ENCODE measurements at regions of chr14 and their contacts with region 1.

Region 1: GRCh38 chr14:32611752-32612151 is 282.7 kb downstream of the AKAP6 start:
- DNase-seq: no peak
- ATAC-seq: no peak
- H3K4me3 ChIP-seq: no peak overlapping the region
- H3K4me3 Mint-ChIP-seq: no peak overlapping the region
- H3K27ac ChIP-seq: no peak overlapping the region
- H3K27ac Mint-ChIP-seq: no peak overlapping the region
- H3K4me1 ChIP-seq: no peaks in the 10 kb centered on the region
- H3K4me1 Mint-ChIP-seq: no peaks in the 10 kb centered on the region
- H3K27me3 ChIP-seq: no peaks in the 10 kb centered on the region
- H3K27me3 Mint-ChIP-seq: no peaks in the 10 kb centered on the region

Region 2: GRCh38 chr14:31377433-31377832 is 1234.3 kb before region 1 on chr14:
- CTCF ChIA-PET with region 1: interaction called in 1 of 2 experiments, 11 read pairs
- POLR2A ChIA-PET with region 1: no interaction called
- DNase-seq: no peak
- ATAC-seq: no peak
- H3K4me3 ChIP-seq: no peak overlapping the region
- H3K4me3 Mint-ChIP-seq: no peak overlapping the region
- H3K27ac ChIP-seq: no peak overlapping the region
- H3K27ac Mint-ChIP-seq: no peak overlapping the region
- H3K4me1 ChIP-seq: peaks cover 0 to 3% of the 10 kb centered on the region in 2 experiments
- H3K4me1 Mint-ChIP-seq: peaks cover 0 to 7% (median 6%) of the 10 kb centered on the region in 3 donors
- H3K27me3 ChIP-seq: no peaks in the 10 kb centered on the region
- H3K27me3 Mint-ChIP-seq: no peaks in the 10 kb centered on the region

Region 3: DNA sequence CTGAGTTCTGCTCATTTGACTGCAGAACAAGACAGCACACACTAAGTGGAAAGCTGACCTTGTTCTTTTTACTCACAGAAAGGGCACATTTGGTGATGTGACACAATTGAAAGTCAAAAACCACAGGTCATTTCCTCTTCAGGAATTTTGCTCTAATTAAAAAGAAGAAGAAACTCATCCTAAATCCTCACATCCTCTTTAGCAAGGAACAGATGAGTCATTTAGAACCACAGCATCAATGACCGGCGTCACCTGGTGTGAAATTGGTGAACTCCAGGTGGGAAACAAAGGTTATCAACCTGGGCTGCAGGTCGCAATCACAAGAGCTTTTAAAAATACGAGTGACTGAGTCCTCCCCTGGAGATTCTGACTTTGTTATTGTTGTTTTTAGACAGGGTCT is 405.8 kb before region 1 on chr14:
- CTCF ChIA-PET with region 1: no interaction called
- POLR2A ChIA-PET with region 1: no interaction called
- DNase-seq: peak in 2 of 35 experiments; percentile 1 to 14
- ATAC-seq: no peak
- H3K4me3 ChIP-seq: no peak overlapping the region
- H3K4me3 Mint-ChIP-seq: no peak overlapping the region
- H3K27ac ChIP-seq: no peak overlapping the region
- H3K27ac Mint-ChIP-seq: no peak overlapping the region
- H3K4me1 ChIP-seq: peaks cover 7 to 23% of the 10 kb centered on the region in 2 experiments
- H3K4me1 Mint-ChIP-seq: peaks cover 25 to 39% (median 31%) of the 10 kb centered on the region in 3 donors
- H3K27me3 ChIP-seq: peaks cover 0 to 2% of the 10 kb centered on the region in 2 experiments
- H3K27me3 Mint-ChIP-seq: peaks cover 0 to 1% of the 10 kb centered on the region in 2 donors

Region 4: DNA sequence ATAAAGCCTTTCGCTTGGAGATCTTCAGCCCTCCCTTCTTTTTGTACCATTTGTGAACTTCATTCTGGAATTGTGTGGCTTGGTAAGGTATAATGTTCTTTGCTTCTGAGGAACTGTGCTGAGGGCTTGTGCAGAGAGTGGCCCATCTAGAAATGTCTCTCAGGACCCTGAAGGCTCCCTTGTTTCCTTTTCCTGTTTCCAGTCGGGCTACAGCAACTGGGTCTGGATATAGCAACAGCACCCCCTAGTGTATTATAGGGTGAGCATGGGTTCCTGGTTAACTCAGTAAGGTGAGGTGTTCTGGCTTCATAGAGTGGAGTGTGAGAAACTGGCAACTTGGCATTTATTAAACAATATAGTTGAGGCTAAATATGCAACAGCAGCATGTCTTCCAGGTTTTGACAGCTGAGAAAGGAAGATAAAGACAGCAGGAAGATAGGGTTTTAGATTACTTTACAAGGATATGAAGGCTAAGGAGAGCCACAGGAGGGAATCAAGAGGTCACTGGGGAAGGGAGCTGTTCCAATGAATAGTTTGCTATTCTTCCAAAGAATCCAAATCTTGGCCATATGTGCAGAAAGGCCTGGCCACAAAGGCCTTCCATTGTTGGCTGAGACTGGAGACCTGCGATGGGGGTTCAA is 359.6 kb before region 1 on chr14:
- CTCF ChIA-PET with region 1: no interaction called
- POLR2A ChIA-PET with region 1: no interaction called
- DNase-seq: peak in 33 of 35 experiments; percentile 1 to 77 (median 26)
- ATAC-seq: peak; percentile 82 to 97 (median 90)
- H3K4me3 ChIP-seq: no peak overlapping the region
- H3K4me3 Mint-ChIP-seq: no peak overlapping the region
- H3K27ac ChIP-seq: no peak overlapping the region
- H3K27ac Mint-ChIP-seq: no peak overlapping the region
- H3K4me1 ChIP-seq: no peaks in the 10 kb centered on the region
- H3K4me1 Mint-ChIP-seq: no peaks in the 10 kb centered on the region
- H3K27me3 ChIP-seq: no peaks in the 10 kb centered on the region
- H3K27me3 Mint-ChIP-seq: no peaks in the 10 kb centered on the region

Measured in T-cell (primary cell).